ENCODE measurements at regions of chr18 and their contacts with region 1.

Region 1: DNA sequence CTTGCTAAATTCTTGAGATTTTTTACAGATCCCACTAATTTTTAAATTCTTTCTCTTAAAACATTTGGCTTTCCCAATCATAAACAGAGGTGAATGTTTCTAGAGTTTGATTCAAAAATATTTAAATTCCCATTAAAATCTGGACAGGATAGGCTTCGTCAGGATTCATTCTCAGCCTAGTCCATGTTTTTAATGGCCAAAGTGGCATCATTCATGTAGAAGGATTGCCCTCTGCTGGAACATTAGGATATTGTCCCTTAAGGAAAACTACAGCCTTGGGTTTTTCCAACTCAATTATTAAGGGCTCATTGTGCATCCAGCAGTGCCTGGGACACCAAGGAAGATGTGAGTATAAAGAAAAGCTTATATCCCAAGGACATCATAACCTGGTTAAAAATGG is 71.7 kb downstream of the TPGS2 start:
- DNase-seq: peak; percentile 70
- H3K4me3 Mint-ChIP-seq: no peak overlapping the region
- H3K27ac Mint-ChIP-seq: no peak overlapping the region
- H3K4me1 Mint-ChIP-seq: peaks cover 11% of the 10 kb centered on the region
- H3K27me3 Mint-ChIP-seq: no peaks in the 10 kb centered on the region
- CTCF ChIP-seq: peak; percentile 79

Region 2: GRCh38 chr18:35756506-35757117 is 1000.5 kb before region 1 on chr18:
- CTCF ChIA-PET with region 1: no interaction called
- POLR2A ChIA-PET with region 1: no interaction called
- intact Hi-C with region 1: loop called (anchors 5 kb)
- DNase-seq: peak; percentile 68
- H3K4me3 Mint-ChIP-seq: no peak overlapping the region
- H3K27ac Mint-ChIP-seq: no peak overlapping the region
- H3K4me1 Mint-ChIP-seq: no peaks in the 10 kb centered on the region
- H3K27me3 Mint-ChIP-seq: peaks cover 18% of the 10 kb centered on the region
- CTCF ChIP-seq: peak; percentile 81

Region 3: DNA sequence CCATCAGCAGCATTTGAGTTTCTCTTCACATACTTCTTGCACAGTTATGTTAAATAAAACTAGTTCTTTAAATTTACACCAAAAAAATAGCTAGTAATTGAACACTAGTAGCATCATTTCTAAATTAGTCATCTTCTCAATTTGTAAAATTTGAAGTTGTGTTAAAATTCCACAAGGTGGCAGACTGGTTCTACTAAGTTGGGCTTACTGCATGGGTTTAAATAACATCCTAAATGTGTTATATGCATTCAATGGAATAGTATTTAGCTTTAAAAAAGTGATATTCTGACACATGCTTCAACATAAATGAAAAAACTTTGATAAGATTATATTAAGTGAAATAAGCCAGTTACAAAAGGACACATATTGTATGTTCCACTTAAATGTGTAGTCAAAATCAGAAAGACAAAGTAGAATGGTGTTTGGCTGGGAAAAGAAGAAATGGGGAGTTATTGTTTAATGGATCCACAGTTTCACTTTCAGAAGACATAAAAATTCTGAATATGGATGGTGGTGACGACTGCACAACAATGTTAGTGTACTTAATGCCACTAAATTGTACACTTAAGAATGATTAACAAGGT is 661.1 kb before region 1 on chr18:
- CTCF ChIA-PET with region 1: interaction called, 3 read pairs
- POLR2A ChIA-PET with region 1: interaction called, 4 read pairs
- intact Hi-C with region 1: loop called (anchors 1 kb)
- DNase-seq: peak; percentile 64
- H3K4me3 Mint-ChIP-seq: no peak overlapping the region
- H3K27ac Mint-ChIP-seq: no peak overlapping the region
- H3K4me1 Mint-ChIP-seq: no peaks in the 10 kb centered on the region
- H3K27me3 Mint-ChIP-seq: no peaks in the 10 kb centered on the region
- CTCF ChIP-seq: peak; percentile 59

Region 4: DNA sequence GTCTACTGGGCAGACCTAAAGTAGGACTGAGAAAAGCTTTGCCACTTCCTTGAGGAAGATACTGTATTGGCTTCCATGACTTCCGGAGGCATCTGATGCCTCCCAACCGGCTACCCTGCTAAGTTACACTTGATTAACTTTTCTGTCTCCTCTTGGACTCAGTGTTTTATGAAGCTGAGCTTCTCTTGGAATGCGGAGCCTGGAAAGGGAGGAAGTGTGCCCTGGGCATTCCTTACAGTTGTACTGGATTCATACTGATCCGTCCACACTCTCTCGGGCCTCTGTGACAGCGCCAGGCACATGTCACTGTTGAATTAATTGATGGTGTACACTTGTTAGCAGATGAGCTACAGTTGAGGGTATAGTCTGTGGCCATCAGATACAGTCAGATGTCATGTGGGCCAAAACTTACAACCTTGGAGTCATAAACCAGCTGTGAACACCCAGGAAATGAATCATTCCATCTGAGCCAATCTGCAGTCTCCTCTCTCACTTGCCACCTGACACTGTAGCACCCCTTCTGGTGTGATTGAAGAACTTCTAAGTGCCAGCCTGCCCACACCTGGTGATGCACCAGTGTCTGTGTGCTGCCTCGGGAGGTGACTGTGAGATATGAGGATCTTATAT is 337.1 kb before region 1 on chr18:
- CTCF ChIA-PET with region 1: interaction called, 3 read pairs
- POLR2A ChIA-PET with region 1: no interaction called
- intact Hi-C with region 1: loop called (anchors 10 kb)
- DNase-seq: peak; percentile 77
- H3K4me3 Mint-ChIP-seq: no peak overlapping the region
- H3K27ac Mint-ChIP-seq: no peak overlapping the region
- H3K4me1 Mint-ChIP-seq: peaks cover 9% of the 10 kb centered on the region
- H3K27me3 Mint-ChIP-seq: no peaks in the 10 kb centered on the region
- CTCF ChIP-seq: peak; percentile 15

Region 5: GRCh38 chr18:36680042-36680441 is 77.0 kb before region 1 on chr18:
- CTCF ChIA-PET with region 1: interaction called, 135 read pairs
- POLR2A ChIA-PET with region 1: no interaction called
- intact Hi-C with region 1: no loop called
- DNase-seq: peak; percentile 15
- H3K4me3 Mint-ChIP-seq: no peak overlapping the region
- H3K27ac Mint-ChIP-seq: no peak overlapping the region
- H3K4me1 Mint-ChIP-seq: no peaks in the 10 kb centered on the region
- H3K27me3 Mint-ChIP-seq: no peaks in the 10 kb centered on the region
- CTCF ChIP-seq: no peak

Measured in MCF 10A (cell line).